CD4-positive, alpha-beta T cell (primary cell): ENCODE measurements at regions of chrX and their contacts with region 1.

Region 1: DNA sequence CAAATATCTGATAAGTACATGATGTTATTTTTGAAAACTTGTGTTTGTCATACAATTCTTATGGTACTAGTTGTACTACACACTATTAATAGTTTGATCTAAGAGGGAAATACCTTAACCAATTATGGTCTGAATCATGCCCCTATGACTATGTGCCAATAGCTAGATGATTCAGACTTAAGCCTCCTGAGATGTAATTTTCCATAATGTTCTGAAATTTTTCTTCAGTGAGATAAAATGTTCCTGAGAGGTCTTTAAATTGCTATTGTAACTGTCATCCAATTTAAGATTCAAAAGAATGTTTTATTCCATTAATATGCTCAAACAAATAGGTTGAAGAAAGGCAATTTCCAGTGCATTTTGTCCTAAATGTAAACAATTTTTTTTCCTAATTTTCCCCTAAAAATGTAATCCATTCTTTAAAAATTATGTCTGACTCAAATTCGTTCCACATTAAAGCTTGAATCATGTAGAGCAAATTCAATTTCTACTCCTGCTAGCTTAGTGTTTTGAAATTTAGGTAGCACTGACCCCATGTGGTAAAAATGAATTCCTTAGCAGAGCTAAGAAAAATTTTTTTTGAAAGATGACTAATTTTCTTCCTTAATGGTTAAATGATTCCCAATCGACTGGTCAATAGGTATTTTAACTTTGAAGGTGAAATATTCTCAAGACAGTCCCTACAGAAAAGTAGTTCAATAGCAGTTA is 49.1 kb downstream of the APOOL start:
- DNase-seq: peak in 1 of 14 experiments; percentile 0
- ATAC-seq: no peak
- H3K4me3 ChIP-seq: no peak overlapping the region
- H3K4me3 Mint-ChIP-seq: no peak overlapping the region
- H3K27ac ChIP-seq: no peak overlapping the region
- H3K27ac Mint-ChIP-seq: no peak overlapping the region
- H3K4me1 ChIP-seq: no peaks in the 10 kb centered on the region
- H3K4me1 Mint-ChIP-seq: no peaks in the 10 kb centered on the region
- H3K27me3 ChIP-seq: no peaks in the 10 kb centered on the region
- H3K27me3 Mint-ChIP-seq: no peaks in the 10 kb centered on the region
- CTCF ChIP-seq: no peak

Region 2: GRCh38 chrX:84729809-84730208 is 323.0 kb before region 1 on chrX:
- CTCF ChIA-PET with region 1: no interaction called
- POLR2A ChIA-PET with region 1: no interaction called
- intact Hi-C with region 1: loop called in 1 of 2 experiments (anchors 10 kb)
- DNase-seq: peak in 3 of 14 experiments; percentile 8 to 19 (median 17)
- ATAC-seq: no peak
- H3K4me3 ChIP-seq: no peak overlapping the region
- H3K4me3 Mint-ChIP-seq: no peak overlapping the region
- H3K27ac ChIP-seq: no peak overlapping the region
- H3K27ac Mint-ChIP-seq: no peak overlapping the region
- H3K4me1 ChIP-seq: no peaks in the 10 kb centered on the region
- H3K4me1 Mint-ChIP-seq: no peaks in the 10 kb centered on the region
- H3K27me3 ChIP-seq: no peaks in the 10 kb centered on the region
- H3K27me3 Mint-ChIP-seq: no peaks in the 10 kb centered on the region
- CTCF ChIP-seq: peak; percentile 23

Region 3: DNA sequence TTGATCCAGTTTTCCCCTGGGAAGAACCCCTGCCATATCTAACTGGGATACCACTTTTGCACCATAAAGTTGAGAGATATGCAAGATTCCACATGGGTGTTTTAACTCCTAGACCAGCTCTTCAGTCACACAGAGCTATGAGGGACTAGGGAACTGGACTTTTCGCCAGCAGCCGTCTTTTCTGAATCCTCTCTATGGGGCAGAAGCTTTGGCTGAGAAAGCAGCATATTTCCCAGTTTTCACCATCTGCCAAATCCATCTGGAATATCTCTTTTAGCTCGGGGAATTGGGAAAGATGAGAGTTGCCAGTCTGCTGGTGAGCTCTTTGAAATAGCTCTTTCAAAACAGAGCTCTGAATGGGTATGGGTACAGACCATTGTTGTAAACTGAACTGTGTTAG is 28.2 kb before region 1 on chrX:
- CTCF ChIA-PET with region 1: no interaction called
- POLR2A ChIA-PET with region 1: no interaction called
- intact Hi-C with region 1: no loop called
- DNase-seq: no peak
- ATAC-seq: no peak
- H3K4me3 ChIP-seq: no peak overlapping the region
- H3K4me3 Mint-ChIP-seq: no peak overlapping the region
- H3K27ac ChIP-seq: no peak overlapping the region
- H3K27ac Mint-ChIP-seq: no peak overlapping the region
- H3K4me1 ChIP-seq: no peaks in the 10 kb centered on the region
- H3K4me1 Mint-ChIP-seq: no peaks in the 10 kb centered on the region
- H3K27me3 ChIP-seq: no peaks in the 10 kb centered on the region
- H3K27me3 Mint-ChIP-seq: no peaks in the 10 kb centered on the region
- CTCF ChIP-seq: no peak